ENCODE measurements at regions of chr15 and their contacts with region 1.

Region 1: DNA sequence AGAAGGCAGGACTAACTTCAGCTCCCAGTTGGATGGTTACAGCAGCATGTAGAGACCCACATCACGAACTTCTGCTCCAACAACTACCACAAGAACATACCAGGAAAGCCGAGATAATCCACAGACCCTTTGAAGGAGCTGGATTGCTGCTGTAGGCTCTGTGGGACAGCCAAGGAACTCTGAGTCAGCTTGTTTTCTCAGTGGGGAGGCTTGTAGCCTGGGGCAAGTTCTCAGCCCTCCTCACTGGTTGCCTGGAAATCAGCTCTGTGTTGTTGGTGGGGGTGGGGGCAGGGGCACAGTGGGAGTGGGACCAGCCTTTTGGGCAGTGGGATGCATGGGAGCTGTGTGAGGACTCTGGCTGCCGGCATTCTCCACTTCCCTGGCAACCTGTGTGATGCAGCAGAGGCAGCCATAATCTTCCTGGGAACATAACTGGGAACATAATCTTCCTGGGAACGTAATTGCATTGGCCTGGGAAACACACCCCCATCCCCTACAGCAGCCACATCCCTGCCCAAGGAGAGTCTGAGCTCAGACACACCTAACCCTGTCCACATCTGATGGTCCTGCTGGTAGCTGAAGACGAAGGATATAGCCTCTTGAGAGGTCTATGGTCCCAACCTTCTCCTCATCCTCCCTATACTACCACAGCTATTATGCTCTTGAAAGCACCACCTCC is 153.1 kb downstream of the PEAK1 start:
- DNase-seq: peak; percentile 64
- ATAC-seq: peak; percentile 54
- H3K4me3 ChIP-seq: no peak overlapping the region
- H3K27ac ChIP-seq: no peak overlapping the region
- H3K4me1 ChIP-seq: no peaks in the 10 kb centered on the region; the same call in none of the 2 replicates
- H3K27me3 ChIP-seq: no peaks in the 10 kb centered on the region
- CTCF ChIP-seq: no peak
- POLR2A ChIP-seq: no peak
- RAD21 ChIP-seq: no peak

Region 2: GRCh38 chr15:77247116-77247515 is 19.7 kb before region 1 on chr15:
- CTCF ChIA-PET with region 1: no interaction called
- POLR2A ChIA-PET with region 1: interaction called, 12 read pairs
- dilution Hi-C with region 1: no loop called
- in situ Hi-C with region 1: no loop called
- intact Hi-C with region 1: no loop called
- DNase-seq: no peak
- ATAC-seq: no peak; the same call in 1 of the 2 replicates
- H3K4me3 ChIP-seq: no peak overlapping the region
- H3K27ac ChIP-seq: no peak overlapping the region
- H3K4me1 ChIP-seq: no peaks in the 10 kb centered on the region
- H3K27me3 ChIP-seq: no peaks in the 10 kb centered on the region
- CTCF ChIP-seq: no peak
- POLR2A ChIP-seq: no peak
- RAD21 ChIP-seq: no peak